Naive thymus-derived CD4-positive, alpha-beta T cell (primary cell): ENCODE measurements at regions of chr2 and their contacts with region 1.

Region 1: DNA sequence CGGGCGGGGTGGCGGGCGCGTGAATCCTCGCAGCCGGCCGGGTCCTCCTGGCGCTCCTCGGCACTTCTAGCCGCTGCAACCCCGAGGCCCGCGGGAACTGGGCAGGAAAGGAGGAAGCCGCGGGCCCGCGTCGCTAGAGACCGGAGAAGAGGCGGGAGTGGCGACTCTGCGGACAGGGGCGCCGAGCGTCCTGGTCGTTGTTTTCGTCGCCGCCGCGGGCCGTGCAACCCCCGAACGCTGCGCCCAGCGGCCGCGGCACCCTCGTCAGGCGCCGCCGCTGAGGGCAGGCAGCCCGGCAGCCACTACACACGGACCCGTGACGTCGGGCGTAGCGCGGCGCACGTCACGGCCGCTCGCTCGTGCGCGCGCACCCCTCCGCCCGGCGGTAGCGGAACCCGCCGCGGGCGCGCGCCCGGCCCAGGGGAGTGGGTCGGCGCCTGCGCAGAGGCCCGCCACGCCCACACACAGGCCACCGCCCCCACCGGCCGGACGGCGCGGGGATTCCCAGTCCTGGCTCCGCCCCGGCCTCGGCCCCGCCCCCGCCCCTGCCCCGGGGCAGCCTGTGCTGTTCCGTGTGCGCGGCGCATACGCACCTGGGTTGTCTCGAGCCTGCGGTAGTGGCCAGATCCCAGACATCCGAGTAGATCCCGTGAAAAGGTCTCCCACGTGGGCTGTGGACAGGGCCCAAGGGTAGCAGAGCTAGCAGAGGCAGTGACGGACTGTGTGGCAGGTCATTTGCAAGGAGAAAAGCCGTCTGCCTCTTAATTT is at the start of gene MAP3K2:
- DNase-seq: peak; percentile 89 to 97 (median 93)
- ATAC-seq: peak; percentile 88
- H3K4me3 ChIP-seq: peak within 1 kb of the TSS; percentile 78
- H3K4me3 Mint-ChIP-seq: peak within 1 kb of the TSS; percentile 87 to 97 (median 91)
- H3K27ac ChIP-seq: peak within 1 kb of the TSS; percentile 100
- H3K27ac Mint-ChIP-seq: peak within 1 kb of the TSS; percentile 95 to 99 (median 97)
- H3K4me1 ChIP-seq: peaks cover 23 to 30% of the 10 kb centered on the region in 2 donors
- H3K4me1 Mint-ChIP-seq: peaks cover 45 to 71% (median 67%) of the 10 kb centered on the region in 7 donors
- H3K27me3 ChIP-seq: no peaks in the 10 kb centered on the region
- H3K27me3 Mint-ChIP-seq: peaks cover 0 to 1% (median 0%) of the 10 kb centered on the region in 5 donors
- total RNA-seq, gene MAP3K2: 60.5 to 111 (median 84.5) TPM

Region 2: GRCh38 chr2:127081826-127082633 is 305.8 kb before region 1 on chr2:
- CTCF ChIA-PET with region 1: interaction called, 3 read pairs
- POLR2A ChIA-PET with region 1: interaction called, 3 read pairs
- intact Hi-C with region 1: loop called (anchors 5 to 10 kb)
- DNase-seq: peak; percentile 64 to 87 (median 83)
- ATAC-seq: peak; percentile 83
- H3K4me3 ChIP-seq: peak overlapping the region; percentile 99
- H3K4me3 Mint-ChIP-seq: peak overlapping the region; percentile 89 to 97 (median 94)
- H3K27ac ChIP-seq: peak overlapping the region; percentile 89
- H3K27ac Mint-ChIP-seq: peak overlapping the region; percentile 94 to 99 (median 98)
- H3K4me1 ChIP-seq: peaks cover 78 to 80% of the 10 kb centered on the region in 2 donors
- H3K4me1 Mint-ChIP-seq: peaks cover 65 to 95% (median 83%) of the 10 kb centered on the region in 7 donors
- H3K27me3 ChIP-seq: no peaks in the 10 kb centered on the region
- H3K27me3 Mint-ChIP-seq: no peaks in the 10 kb centered on the region

Region 3: GRCh38 chr2:127293748-127294562 is 93.9 kb before region 1 on chr2 and contains the start of gene ERCC3:
- CTCF ChIA-PET with region 1: no interaction called
- POLR2A ChIA-PET with region 1: interaction called, 3 read pairs
- intact Hi-C with region 1: loop called (anchors 1 to 10 kb)
- DNase-seq: peak; percentile 54 to 81 (median 72)
- ATAC-seq: peak; percentile 93
- H3K4me3 ChIP-seq: peak within 1 kb of the TSS; percentile 87
- H3K4me3 Mint-ChIP-seq: peak within 1 kb of the TSS; percentile 92 to 99 (median 98)
- H3K27ac ChIP-seq: peak within 1 kb of the TSS; percentile 86
- H3K27ac Mint-ChIP-seq: peak within 1 kb of the TSS; percentile 77 to 97 (median 95)
- H3K4me1 ChIP-seq: peaks cover 8 to 12% of the 10 kb centered on the region in 2 donors
- H3K4me1 Mint-ChIP-seq: peaks cover 18 to 49% (median 37%) of the 10 kb centered on the region in 7 donors
- H3K27me3 ChIP-seq: no peaks in the 10 kb centered on the region
- H3K27me3 Mint-ChIP-seq: no peaks in the 10 kb centered on the region
- total RNA-seq, gene ERCC3: 43.4 to 71.5 (median 56.8) TPM

Region 4: GRCh38 chr2:127398239-127398590 is 10.4 kb after region 1 on chr2:
- CTCF ChIA-PET with region 1: no interaction called
- POLR2A ChIA-PET with region 1: interaction called, 3 read pairs
- intact Hi-C with region 1: loop called in 1 of 2 experiments (anchors 1 kb)
- DNase-seq: peak in 1 of 9 donors; percentile 48
- ATAC-seq: peak; percentile 91
- H3K4me3 ChIP-seq: no peak overlapping the region
- H3K4me3 Mint-ChIP-seq: peak overlapping the region in 1 of 10 donors; percentile 52
- H3K27ac ChIP-seq: no peak overlapping the region
- H3K27ac Mint-ChIP-seq: peak overlapping the region in 1 of 9 donors; percentile 4
- H3K4me1 ChIP-seq: no peaks in the 10 kb centered on the region
- H3K4me1 Mint-ChIP-seq: peaks cover 0 to 17% (median 0%) of the 10 kb centered on the region in 7 donors
- H3K27me3 ChIP-seq: no peaks in the 10 kb centered on the region
- H3K27me3 Mint-ChIP-seq: peaks cover 0 to 6% (median 0%) of the 10 kb centered on the region in 5 donors

Region 5: GRCh38 chr2:127415593-127416505 is 28.0 kb after region 1 on chr2:
- CTCF ChIA-PET with region 1: interaction called, 4 read pairs
- POLR2A ChIA-PET with region 1: interaction called, 25 read pairs
- intact Hi-C with region 1: loop called (anchors 1 kb)
- DNase-seq: peak; percentile 66 to 84 (median 80)
- ATAC-seq: peak; percentile 94
- H3K4me3 ChIP-seq: peak overlapping the region; percentile 67
- H3K4me3 Mint-ChIP-seq: peak overlapping the region; percentile 76 to 91 (median 84)
- H3K27ac ChIP-seq: peak overlapping the region; percentile 61
- H3K27ac Mint-ChIP-seq: peak overlapping the region in 7 of 9 donors; percentile 21 to 82 (median 42)
- H3K4me1 ChIP-seq: peaks cover 0 to 7% of the 10 kb centered on the region in 2 donors
- H3K4me1 Mint-ChIP-seq: peaks cover 14 to 34% (median 19%) of the 10 kb centered on the region in 7 donors
- H3K27me3 ChIP-seq: no peaks in the 10 kb centered on the region
- H3K27me3 Mint-ChIP-seq: peaks cover 5 to 35% (median 10%) of the 10 kb centered on the region in 5 donors

Region 6: GRCh38 chr2:127448526-127448925 is 60.7 kb after region 1 on chr2:
- CTCF ChIA-PET with region 1: no interaction called
- POLR2A ChIA-PET with region 1: no interaction called
- intact Hi-C with region 1: no loop called
- DNase-seq: no peak
- ATAC-seq: no peak
- H3K4me3 ChIP-seq: no peak overlapping the region
- H3K4me3 Mint-ChIP-seq: no peak overlapping the region
- H3K27ac ChIP-seq: no peak overlapping the region
- H3K27ac Mint-ChIP-seq: no peak overlapping the region
- H3K4me1 ChIP-seq: no peaks in the 10 kb centered on the region
- H3K4me1 Mint-ChIP-seq: no peaks in the 10 kb centered on the region
- H3K27me3 ChIP-seq: no peaks in the 10 kb centered on the region
- H3K27me3 Mint-ChIP-seq: peaks cover 0 to 5% (median 0%) of the 10 kb centered on the region in 5 donors

Region 7: GRCh38 chr2:128027801-128028667 is 640.2 kb after region 1 on chr2 and contains the start of gene SAP130:
- CTCF ChIA-PET with region 1: no interaction called
- POLR2A ChIA-PET with region 1: interaction called, 5 read pairs
- intact Hi-C with region 1: loop called (anchors 5 to 10 kb)
- DNase-seq: peak; percentile 96 to 99 (median 98)
- ATAC-seq: peak; percentile 86
- H3K4me3 ChIP-seq: peak within 1 kb of the TSS; percentile 86
- H3K4me3 Mint-ChIP-seq: peak within 1 kb of the TSS; percentile 87 to 98 (median 98)
- H3K27ac ChIP-seq: peak within 1 kb of the TSS; percentile 91
- H3K27ac Mint-ChIP-seq: peak within 1 kb of the TSS; percentile 52 to 97 (median 93)
- H3K4me1 ChIP-seq: peaks cover 0 to 14% of the 10 kb centered on the region in 2 donors
- H3K4me1 Mint-ChIP-seq: peaks cover 14 to 32% (median 28%) of the 10 kb centered on the region in 7 donors
- H3K27me3 ChIP-seq: no peaks in the 10 kb centered on the region
- H3K27me3 Mint-ChIP-seq: peaks cover 0 to 16% (median 0%) of the 10 kb centered on the region in 5 donors
- total RNA-seq, gene SAP130: 29.9 to 38.0 (median 30.9) TPM